Aorta (tissue), 5 donors: ENCODE measurements at regions of chr2 and their contacts with region 1.

Region 1: GRCh38 chr2:241355983-241356870 is at the start of gene FARP2:
- DNase-seq: peak; percentile 100
- ATAC-seq: peak; percentile 96
- H3K4me3 ChIP-seq: peak within 1 kb of the TSS; percentile 23 to 74
- H3K27ac ChIP-seq: peak within 1 kb of the TSS; percentile 38 to 42
- H3K4me1 ChIP-seq: peaks cover 0 to 6% of the 10 kb centered on the region in 2 donors
- H3K27me3 ChIP-seq: no peaks in the 10 kb centered on the region
- total RNA-seq, gene FARP2: 49.1 to 64.4 TPM

Region 2: GRCh38 chr2:241315093-241315878 is 40.9 kb before region 1 on chr2 and contains the start of gene HDLBP:
- intact Hi-C with region 1: loop called (anchors 2 to 5 kb)
- DNase-seq: peak; percentile 100
- ATAC-seq: peak; percentile 97
- H3K4me3 ChIP-seq: peak within 1 kb of the TSS; percentile 65 to 81
- H3K27ac ChIP-seq: peak within 1 kb of the TSS; percentile 88 to 98
- H3K4me1 ChIP-seq: peaks cover 0 to 5% of the 10 kb centered on the region in 2 donors
- H3K27me3 ChIP-seq: no peaks in the 10 kb centered on the region
- total RNA-seq, gene HDLBP: 415 to 476 TPM

Region 3: GRCh38 chr2:241379481-241380480 is 23.6 kb after region 1 on chr2:
- intact Hi-C with region 1: loop called in 1 of 2 experiments (anchors 1 kb)
- DNase-seq: no peak
- ATAC-seq: peak; percentile 62
- H3K4me3 ChIP-seq: no peak overlapping the region
- H3K27ac ChIP-seq: peak overlapping the region; percentile 83 to 94
- H3K4me1 ChIP-seq: peaks cover 6 to 21% of the 10 kb centered on the region in 2 donors
- H3K27me3 ChIP-seq: no peaks in the 10 kb centered on the region

Region 4: DNA sequence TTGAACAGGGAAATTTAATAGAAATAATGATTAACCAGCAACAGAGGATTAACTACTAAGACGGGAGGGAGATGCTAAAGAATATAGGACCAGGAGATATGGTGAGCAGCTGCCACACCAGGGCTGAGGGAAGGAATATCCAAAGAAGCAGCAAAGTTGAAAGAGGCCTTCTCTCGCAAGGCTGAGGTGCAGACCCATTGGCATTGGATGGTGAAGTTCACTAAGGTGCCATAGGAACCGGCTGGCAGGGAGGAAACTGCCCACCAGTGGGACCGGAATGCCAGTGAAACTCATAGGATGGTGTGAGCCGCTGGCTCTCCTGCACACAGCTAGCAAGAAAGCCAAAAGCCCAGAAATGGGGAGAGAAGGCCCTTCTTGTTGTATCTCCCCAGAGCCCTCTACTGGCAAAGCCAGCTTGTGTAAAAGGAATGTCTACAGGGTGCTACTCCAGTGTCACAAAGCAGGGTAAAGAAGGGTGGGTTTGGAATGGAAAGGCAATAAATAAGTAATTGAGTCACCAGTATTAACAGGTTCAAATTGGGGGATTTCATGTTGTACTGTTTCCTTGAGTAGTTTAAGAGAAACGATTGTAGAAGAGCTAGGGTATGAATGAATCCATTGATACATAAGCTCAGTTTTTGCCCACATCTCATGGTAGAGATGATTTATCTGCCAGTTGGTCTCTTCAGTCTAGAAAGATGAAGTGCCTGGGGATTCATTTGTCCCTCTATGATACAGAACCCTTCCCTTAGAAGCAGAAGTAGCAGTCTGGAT is 35.9 kb after region 1 on chr2:
- intact Hi-C with region 1: loop called in 1 of 2 experiments (anchors 5 kb)
- DNase-seq: no peak
- ATAC-seq: no peak
- H3K4me3 ChIP-seq: no peak overlapping the region
- H3K27ac ChIP-seq: no peak overlapping the region
- H3K4me1 ChIP-seq: no peaks in the 10 kb centered on the region
- H3K27me3 ChIP-seq: no peaks in the 10 kb centered on the region